ENCODE measurements at regions of chr3 and their contacts with region 1.

Region 1: GRCh38 chr3:130093741-130094391 is 12.2 kb downstream of the ALG1L2 start:
- DNase-seq: peak; percentile 77
- H3K4me3 ChIP-seq: peak overlapping the region; percentile 71
- H3K27ac ChIP-seq: peak overlapping the region; percentile 64
- H3K4me1 ChIP-seq: peaks cover 21% of the 10 kb centered on the region
- CTCF ChIP-seq: no peak

Region 2: DNA sequence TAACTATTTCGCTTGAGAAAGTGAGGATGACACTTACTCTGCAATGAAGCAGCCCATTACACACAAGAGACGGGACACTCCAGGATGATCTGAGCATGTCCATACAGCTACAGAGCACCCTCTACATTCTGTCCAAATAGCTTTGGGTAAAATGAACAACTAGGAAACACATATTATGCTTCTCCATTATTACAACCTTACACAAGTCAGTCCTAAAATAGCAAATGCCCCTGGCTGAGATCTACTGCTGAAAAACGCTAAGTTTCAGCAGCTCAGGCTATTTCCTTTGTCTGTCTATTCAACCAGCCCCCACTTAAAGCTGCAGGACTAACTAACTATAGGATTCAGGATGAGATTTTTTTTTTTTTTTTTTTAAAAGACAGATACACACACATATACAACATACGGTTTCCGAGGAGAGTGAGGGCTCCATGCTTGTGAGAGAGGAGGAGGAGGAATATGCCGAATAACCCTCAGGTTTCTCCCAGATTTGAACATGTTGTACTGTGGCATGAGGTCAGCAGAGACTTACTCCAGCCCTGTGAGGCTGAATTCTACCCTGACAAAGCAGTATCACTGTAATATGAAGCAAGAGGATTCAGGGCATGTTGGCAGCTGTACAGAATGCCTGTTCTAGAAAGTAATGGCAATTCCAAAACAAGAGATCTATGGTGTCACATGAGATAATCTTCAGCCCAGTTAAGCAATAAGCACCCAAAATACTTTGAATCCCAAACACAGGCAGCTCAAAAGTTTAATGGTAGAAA is 370.1 kb before region 1 on chr3:
- CTCF ChIA-PET with region 1: no interaction called
- POLR2A ChIA-PET with region 1: no interaction called
- intact Hi-C with region 1: no loop called
- DNase-seq: no peak
- H3K4me3 ChIP-seq: no peak overlapping the region
- H3K27ac ChIP-seq: no peak overlapping the region
- H3K4me1 ChIP-seq: no peaks in the 10 kb centered on the region
- CTCF ChIP-seq: no peak

Region 3: GRCh38 chr3:129855454-129856419 is 238.1 kb before region 1 on chr3:
- CTCF ChIA-PET with region 1: no interaction called
- POLR2A ChIA-PET with region 1: no interaction called
- intact Hi-C with region 1: no loop called
- DNase-seq: no peak
- H3K4me3 ChIP-seq: no peak overlapping the region
- H3K27ac ChIP-seq: no peak overlapping the region
- H3K4me1 ChIP-seq: peaks cover 5% of the 10 kb centered on the region
- CTCF ChIP-seq: no peak

Region 4: GRCh38 chr3:129942296-129942695 is 151.6 kb before region 1 on chr3:
- CTCF ChIA-PET with region 1: interaction called, 4 read pairs
- POLR2A ChIA-PET with region 1: no interaction called
- intact Hi-C with region 1: loop called (anchors 1 kb)
- DNase-seq: peak; percentile 68
- H3K4me3 ChIP-seq: no peak overlapping the region
- H3K27ac ChIP-seq: no peak overlapping the region
- H3K4me1 ChIP-seq: no peaks in the 10 kb centered on the region
- CTCF ChIP-seq: peak; percentile 84

Region 5: DNA sequence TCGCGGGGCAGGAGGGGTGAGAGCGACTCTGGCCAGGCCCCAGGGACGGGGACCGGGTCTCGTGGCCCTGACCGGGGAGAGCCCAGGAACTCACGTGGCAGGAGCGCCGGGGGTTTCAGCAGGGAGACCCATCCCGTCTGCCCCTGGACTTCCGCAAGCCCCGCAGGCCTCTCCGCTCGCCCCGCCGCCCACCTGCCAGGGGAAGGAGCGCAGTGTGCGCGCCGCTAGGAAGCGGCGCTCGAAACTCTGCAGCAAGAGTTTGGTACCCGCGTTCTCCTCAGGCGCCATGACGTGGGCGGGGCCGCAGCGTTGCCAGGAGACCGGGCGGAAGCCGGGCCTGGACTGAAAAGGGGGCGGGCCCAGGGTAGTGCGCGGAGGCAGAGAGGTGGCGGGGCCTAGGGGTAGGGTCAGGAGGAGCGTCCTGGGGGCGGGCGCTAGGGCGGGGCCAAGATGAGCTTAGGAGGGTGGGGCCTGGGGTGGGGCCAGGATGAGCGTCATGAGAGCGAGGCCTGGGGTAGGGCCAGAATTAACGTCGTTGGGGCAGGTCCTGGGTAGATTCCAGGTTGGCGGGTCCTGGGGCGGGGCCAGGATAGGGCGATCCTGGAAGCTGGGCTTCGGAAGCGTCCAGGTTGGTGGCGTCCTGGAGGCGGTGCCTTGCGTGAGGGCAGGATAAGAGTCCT is 17.5 kb after region 1 on chr3:
- CTCF ChIA-PET with region 1: interaction called, 5 read pairs
- POLR2A ChIA-PET with region 1: interaction called, 12 read pairs
- intact Hi-C with region 1: no loop called
- DNase-seq: peak; percentile 97
- H3K4me3 ChIP-seq: peak overlapping the region; percentile 85
- H3K27ac ChIP-seq: peak overlapping the region; percentile 43
- H3K4me1 ChIP-seq: peaks cover 4% of the 10 kb centered on the region
- CTCF ChIP-seq: no peak

Region 6: DNA sequence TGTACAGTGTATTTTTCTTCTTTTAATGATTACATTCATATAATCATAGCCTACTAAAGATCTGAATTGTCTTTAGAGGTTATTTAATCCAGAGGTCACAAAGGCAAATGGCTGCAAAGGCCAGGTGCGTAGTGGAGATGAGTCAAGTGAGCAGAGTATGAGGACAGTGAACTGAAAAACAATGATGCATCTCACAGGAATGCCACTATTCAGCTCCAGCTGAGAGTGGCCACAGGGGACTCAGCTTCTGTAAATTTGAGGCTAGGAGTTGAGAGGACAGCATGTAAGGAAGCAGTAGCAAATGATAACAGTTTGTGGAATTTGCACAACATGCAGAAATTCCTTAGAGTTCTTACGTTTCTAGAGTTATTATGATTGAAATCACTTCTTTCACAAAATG is 302.1 kb after region 1 on chr3:
- CTCF ChIA-PET with region 1: no interaction called
- POLR2A ChIA-PET with region 1: no interaction called
- intact Hi-C with region 1: no loop called
- DNase-seq: no peak
- H3K4me3 ChIP-seq: no peak overlapping the region
- H3K27ac ChIP-seq: no peak overlapping the region
- H3K4me1 ChIP-seq: no peaks in the 10 kb centered on the region
- CTCF ChIP-seq: no peak